ENCODE measurements at regions of chr1 and their contacts with region 1.

Region 1: DNA sequence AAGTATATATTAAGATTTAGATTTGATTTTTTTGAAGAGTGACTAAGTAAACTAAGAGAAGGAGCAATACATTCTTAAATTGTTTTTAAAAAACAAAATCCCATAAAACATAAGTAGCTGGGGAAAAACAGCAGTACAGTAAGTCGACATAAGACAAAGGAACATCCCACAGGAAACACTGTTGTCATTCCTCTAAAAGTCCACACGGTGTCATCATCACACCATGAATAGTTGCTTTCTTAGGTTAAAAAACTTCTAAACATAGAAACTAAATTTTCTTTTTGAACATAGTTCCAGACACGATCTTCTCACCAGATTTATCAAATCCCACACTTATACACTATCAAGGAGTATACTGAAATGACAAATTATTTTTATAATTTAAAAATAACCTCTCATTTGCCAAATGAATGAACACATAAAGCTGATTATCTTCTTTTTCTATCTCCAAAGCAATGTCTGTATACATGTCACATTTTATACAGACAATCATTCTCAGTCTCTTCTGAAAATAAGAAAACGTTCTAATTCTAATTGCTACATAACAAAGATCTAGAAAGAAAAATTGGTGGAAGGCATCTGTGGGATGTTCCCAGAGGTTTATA is 15.8 kb downstream of the ODF2L start:
- DNase-seq: peak in 2 of 5 donors; percentile 44 to 49
- H3K4me3 ChIP-seq: no peak overlapping the region
- H3K4me3 Mint-ChIP-seq: peak overlapping the region in 1 of 7 donors; percentile 29
- H3K27ac ChIP-seq: no peak overlapping the region
- H3K27ac Mint-ChIP-seq: no peak overlapping the region
- H3K4me1 ChIP-seq: no peaks in the 10 kb centered on the region
- H3K4me1 Mint-ChIP-seq: peaks cover 17 to 28% (median 27%) of the 10 kb centered on the region in 3 donors
- H3K27me3 ChIP-seq: no peaks in the 10 kb centered on the region
- H3K27me3 Mint-ChIP-seq: no peaks in the 10 kb centered on the region

Region 2: GRCh38 chr1:86409416-86410021 is 29.2 kb after region 1 on chr1:
- CTCF ChIA-PET with region 1: no interaction called
- POLR2A ChIA-PET with region 1: no interaction called
- DNase-seq: no peak
- H3K4me3 ChIP-seq: no peak overlapping the region
- H3K4me3 Mint-ChIP-seq: no peak overlapping the region
- H3K27ac ChIP-seq: no peak overlapping the region
- H3K27ac Mint-ChIP-seq: no peak overlapping the region
- H3K4me1 ChIP-seq: no peaks in the 10 kb centered on the region
- H3K4me1 Mint-ChIP-seq: no peaks in the 10 kb centered on the region
- H3K27me3 ChIP-seq: no peaks in the 10 kb centered on the region
- H3K27me3 Mint-ChIP-seq: no peaks in the 10 kb centered on the region

Region 3: DNA sequence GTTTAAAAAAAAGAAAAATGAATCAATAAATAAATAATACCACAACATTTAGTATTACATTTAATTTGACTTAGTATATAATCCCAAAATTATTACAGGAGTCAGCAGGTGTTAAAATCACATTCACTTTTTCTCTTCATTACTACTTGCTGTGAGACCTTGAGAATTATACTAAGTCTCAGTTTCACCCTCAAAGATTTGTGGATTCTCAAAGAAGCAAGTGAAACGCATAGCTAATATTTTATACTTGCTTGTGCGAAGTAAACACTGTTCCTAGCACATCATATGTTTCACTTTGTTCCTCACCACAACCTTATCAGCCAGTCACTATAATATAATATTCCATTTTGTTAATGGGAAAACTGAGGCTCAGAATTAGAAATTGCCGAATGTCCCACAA is 92.4 kb after region 1 on chr1:
- CTCF ChIA-PET with region 1: interaction called, 12 read pairs
- POLR2A ChIA-PET with region 1: no interaction called
- DNase-seq: no peak
- H3K4me3 ChIP-seq: no peak overlapping the region
- H3K4me3 Mint-ChIP-seq: no peak overlapping the region
- H3K27ac ChIP-seq: no peak overlapping the region
- H3K27ac Mint-ChIP-seq: no peak overlapping the region
- H3K4me1 ChIP-seq: no peaks in the 10 kb centered on the region
- H3K4me1 Mint-ChIP-seq: no peaks in the 10 kb centered on the region
- H3K27me3 ChIP-seq: no peaks in the 10 kb centered on the region
- H3K27me3 Mint-ChIP-seq: peaks cover 10 to 26% of the 10 kb centered on the region in 2 donors

Measured in CD8-positive, alpha-beta memory T cell (primary cell).